ENCODE measurements at regions of chr2 and their contacts with region 1.

Region 1: GRCh38 chr2:21333024-21333625 is 209.4 kb downstream of the TDRD15 start:
- DNase-seq: no peak
- H3K4me3 ChIP-seq: no peak overlapping the region
- H3K27ac ChIP-seq: no peak overlapping the region
- H3K4me1 ChIP-seq: peaks cover 5% of the 10 kb centered on the region
- H3K27me3 ChIP-seq: no peaks in the 10 kb centered on the region
- CTCF ChIP-seq: no peak
- EP300 ChIP-seq: no peak
- POLR2A ChIP-seq: no peak

Region 2: GRCh38 chr2:21245565-21245964 is 87.6 kb before region 1 on chr2:
- intact Hi-C with region 1: no loop called
- DNase-seq: no peak
- H3K4me3 ChIP-seq: no peak overlapping the region
- H3K27ac ChIP-seq: no peak overlapping the region
- H3K4me1 ChIP-seq: no peaks in the 10 kb centered on the region
- H3K27me3 ChIP-seq: no peaks in the 10 kb centered on the region
- CTCF ChIP-seq: no peak
- EP300 ChIP-seq: no peak
- POLR2A ChIP-seq: no peak

Region 3: DNA sequence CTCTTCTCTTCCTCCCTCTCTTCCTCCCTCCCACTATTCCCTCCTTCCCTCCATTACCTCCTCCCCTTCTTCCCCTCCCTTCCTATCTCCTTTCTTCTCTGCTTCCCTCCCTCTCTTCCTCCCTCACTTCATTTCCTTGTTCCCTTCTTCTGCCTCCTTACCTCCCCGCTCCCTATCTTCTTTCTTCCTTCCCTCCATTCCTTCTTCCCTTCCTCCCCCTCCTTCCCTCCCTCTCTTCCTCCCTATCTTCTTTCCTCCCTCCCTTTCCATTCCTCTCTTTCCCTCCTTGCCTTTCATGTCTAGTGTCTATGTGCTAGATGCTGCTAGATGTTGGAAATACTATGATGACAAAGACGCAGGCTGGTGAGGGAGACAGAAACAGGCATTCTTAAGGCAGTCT is 36.7 kb after region 1 on chr2:
- intact Hi-C with region 1: loop called in 1 of 4 experiments (anchors 2 kb)
- DNase-seq: no peak
- H3K4me3 ChIP-seq: no peak overlapping the region
- H3K27ac ChIP-seq: no peak overlapping the region
- H3K4me1 ChIP-seq: no peaks in the 10 kb centered on the region
- H3K27me3 ChIP-seq: no peaks in the 10 kb centered on the region
- CTCF ChIP-seq: no peak
- EP300 ChIP-seq: no peak
- POLR2A ChIP-seq: no peak

Measured in ovary (tissue), 10 donors.